ENCODE measurements at regions of chr16 and their contacts with region 1.

Region 1: GRCh38 chr16:67928561-67929364 is 2.9 kb downstream of the CTRL start:
- DNase-seq: peak; percentile 77 to 90
- ATAC-seq: peak; percentile 78
- H3K4me3 ChIP-seq: no peak overlapping the region
- H3K27ac ChIP-seq: no peak overlapping the region
- H3K4me1 ChIP-seq: no peaks in the 10 kb centered on the region
- H3K27me3 ChIP-seq: no peaks in the 10 kb centered on the region

Region 2: GRCh38 chr16:67883872-67884261 is 44.9 kb before region 1 on chr16:
- intact Hi-C with region 1: loop called (anchors 1 kb)
- DNase-seq: peak; percentile 70 to 89
- ATAC-seq: peak; percentile 62
- H3K4me3 ChIP-seq: no peak overlapping the region
- H3K27ac ChIP-seq: peak overlapping the region in 1 of 2 donors; percentile 6
- H3K4me1 ChIP-seq: no peaks in the 10 kb centered on the region
- H3K27me3 ChIP-seq: no peaks in the 10 kb centered on the region

Region 3: DNA sequence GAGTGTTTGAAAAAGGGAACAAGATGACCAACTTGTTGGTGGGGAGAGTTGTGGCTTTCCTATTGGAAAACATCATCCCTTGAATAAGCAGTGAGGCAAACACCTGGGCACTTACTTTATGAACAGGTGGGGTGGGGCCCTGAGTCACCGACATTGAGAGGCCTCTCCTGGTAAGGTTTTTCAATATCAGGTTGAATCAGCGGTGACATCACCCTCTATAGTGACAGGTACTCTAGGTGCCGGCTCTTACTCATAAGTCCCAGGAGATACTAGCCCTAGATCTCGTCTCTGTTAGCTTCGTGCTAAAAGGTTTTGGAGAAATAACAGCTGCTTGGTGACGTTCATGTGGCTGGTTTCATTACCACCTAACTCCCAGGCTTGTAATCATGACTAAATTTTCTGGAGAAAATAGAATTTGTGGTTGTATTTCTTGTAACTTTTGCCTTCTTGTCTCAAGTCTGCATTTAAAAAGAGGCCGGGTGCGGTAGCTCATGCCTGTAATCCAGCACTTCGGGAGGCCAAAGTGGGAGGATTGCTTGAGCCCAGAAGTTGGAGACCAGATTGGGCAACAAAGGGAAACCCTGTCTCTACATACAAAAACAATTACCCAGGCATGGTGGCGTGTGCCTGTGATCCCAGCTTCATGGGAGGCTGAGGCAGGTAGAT is 827.6 kb after region 1 on chr16:
- intact Hi-C with region 1: no loop called
- DNase-seq: no peak
- ATAC-seq: no peak
- H3K4me3 ChIP-seq: no peak overlapping the region
- H3K27ac ChIP-seq: no peak overlapping the region
- H3K4me1 ChIP-seq: no peaks in the 10 kb centered on the region
- H3K27me3 ChIP-seq: no peaks in the 10 kb centered on the region

Measured in aorta (tissue), 5 donors.